ENCODE measurements at regions of chr2 and their contacts with region 1.

Region 1: GRCh38 chr2:42053791-42054701 is 6.2 kb downstream of the PKDCC start:
- DNase-seq: no peak
- H3K4me3 ChIP-seq: no peak overlapping the region
- H3K27ac ChIP-seq: no peak overlapping the region
- H3K4me1 ChIP-seq: peaks cover 5 to 45% (median 36%) of the 10 kb centered on the region in 4 experiments
- H3K27me3 ChIP-seq: peaks cover 0 to 6% (median 4%) of the 10 kb centered on the region in 4 experiments; a peak in 5 of 7 replicates
- CTCF ChIP-seq: no peak
- EP300 ChIP-seq: no peak
- POLR2A ChIP-seq: no peak
- RAD21 ChIP-seq: no peak

Region 2: DNA sequence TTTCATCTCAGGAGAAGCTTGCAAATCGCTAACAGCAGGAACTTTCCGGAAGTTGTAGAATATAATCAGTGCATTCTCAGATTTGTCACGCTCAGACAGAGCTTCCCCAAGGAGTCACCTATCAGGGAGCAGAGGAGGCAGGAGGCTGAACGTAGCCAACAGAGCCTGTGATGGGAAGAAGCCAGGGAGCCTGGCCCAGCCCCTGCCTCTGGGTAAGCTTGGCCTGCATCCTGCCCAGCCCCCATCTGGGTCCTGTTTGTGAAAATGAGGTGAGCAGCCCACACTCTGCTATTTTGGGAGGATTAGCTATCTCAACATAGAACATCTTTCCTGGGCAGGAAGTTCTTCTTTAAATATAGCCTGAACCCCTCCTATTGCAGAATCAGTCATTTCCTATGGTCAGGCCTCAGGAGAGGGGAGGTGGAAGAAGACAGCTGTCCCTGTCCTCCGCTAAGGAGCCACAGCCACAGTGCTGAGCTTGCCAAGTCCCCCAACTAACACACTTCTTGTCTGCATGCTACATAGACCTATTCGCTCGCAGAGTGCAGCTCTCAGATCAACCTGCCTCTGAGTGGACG is 25.4 kb before region 1 on chr2:
- CTCF ChIA-PET with region 1: interaction called, 12 read pairs
- POLR2A ChIA-PET with region 1: interaction called, 46 read pairs
- DNase-seq: no peak
- H3K4me3 ChIP-seq: no peak overlapping the region
- H3K27ac ChIP-seq: no peak overlapping the region
- H3K4me1 ChIP-seq: peaks cover 19 to 42% (median 27%) of the 10 kb centered on the region in 4 experiments
- H3K27me3 ChIP-seq: peaks cover 0 to 12% (median 7%) of the 10 kb centered on the region in 4 experiments; a peak in 3 of 7 replicates
- CTCF ChIP-seq: no peak
- EP300 ChIP-seq: no peak
- POLR2A ChIP-seq: no peak
- RAD21 ChIP-seq: no peak

Region 3: DNA sequence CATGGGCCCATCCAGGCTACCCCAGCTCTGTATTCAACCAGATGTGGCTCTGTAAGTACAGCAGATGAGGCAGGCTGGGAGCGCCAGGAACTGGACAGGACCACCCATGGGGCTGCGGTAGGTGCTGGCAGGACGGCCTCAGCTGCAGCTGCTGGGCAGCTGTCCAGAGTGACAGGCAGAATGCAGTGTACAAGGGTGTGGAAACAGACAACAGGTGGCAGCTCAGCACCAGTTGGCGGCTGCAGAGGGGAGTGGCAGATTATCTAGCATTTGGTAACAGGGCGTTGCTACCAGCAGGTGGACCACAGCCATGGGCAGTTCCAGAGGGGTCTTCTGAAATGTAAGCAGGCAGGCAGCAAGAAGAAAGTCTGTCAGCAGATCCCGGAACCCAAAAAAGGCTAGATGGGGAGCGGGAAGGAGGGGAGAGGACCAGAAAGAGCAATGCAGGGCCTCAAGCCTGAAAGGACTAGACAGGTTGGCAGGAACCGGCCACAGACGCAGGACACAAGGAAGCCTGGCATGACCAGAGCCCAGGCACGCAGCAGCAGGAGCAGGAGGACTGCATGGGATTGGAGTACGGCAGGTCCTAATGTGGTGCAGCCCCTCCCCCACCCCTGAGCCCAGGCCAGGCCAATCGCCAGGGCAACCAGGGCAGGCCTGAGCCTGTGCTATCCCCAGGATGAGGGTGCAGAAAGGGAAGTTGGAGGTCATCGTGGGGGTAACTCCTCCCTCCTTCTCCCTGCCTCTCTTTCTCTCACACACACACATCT is 18.5 kb after region 1 on chr2:
- CTCF ChIA-PET with region 1: interaction called, 12 read pairs
- POLR2A ChIA-PET with region 1: interaction called, 7 read pairs
- DNase-seq: no peak
- H3K4me3 ChIP-seq: no peak overlapping the region
- H3K27ac ChIP-seq: no peak overlapping the region
- H3K4me1 ChIP-seq: peaks cover 0 to 9% (median 0%) of the 10 kb centered on the region in 4 experiments; a peak in 3 of 7 replicates
- H3K27me3 ChIP-seq: no peaks in the 10 kb centered on the region
- CTCF ChIP-seq: peak; percentile 9 to 30 (median 19)
- EP300 ChIP-seq: no peak
- POLR2A ChIP-seq: no peak
- RAD21 ChIP-seq: peak in 1 of 2 experiments; percentile 19; a peak in 1 of 4 replicates